Activated T-helper 2 cell treated with anti-CD3 and anti-CD28 coated beads, Interferon-gamma antibody, Interleukin-2, Interleukin-4, amounts not matched to agents 10 μg/mL and 5 μg/mL and 100 μg/mL, durations not matched to agents 14 hours and 24 hours and 36 hours (primary cell): ENCODE measurements at regions of chrX and their contacts with region 1.

Region 1: GRCh38 chrX:41720125-41720779 is 3.7 kb upstream of the GPR82 start:
- DNase-seq: peak; percentile 23
- H3K4me3 Mint-ChIP-seq: no peak overlapping the region
- H3K27ac Mint-ChIP-seq: no peak overlapping the region
- H3K4me1 Mint-ChIP-seq: peaks cover 37% of the 10 kb centered on the region
- H3K27me3 Mint-ChIP-seq: no peaks in the 10 kb centered on the region

Region 2: GRCh38 chrX:40945361-40945713 is 774.9 kb before region 1 on chrX:
- intact Hi-C with region 1: no loop called
- DNase-seq: no peak
- H3K4me3 Mint-ChIP-seq: no peak overlapping the region
- H3K27ac Mint-ChIP-seq: no peak overlapping the region
- H3K4me1 Mint-ChIP-seq: peaks cover 3% of the 10 kb centered on the region
- H3K27me3 Mint-ChIP-seq: no peaks in the 10 kb centered on the region

Region 3: DNA sequence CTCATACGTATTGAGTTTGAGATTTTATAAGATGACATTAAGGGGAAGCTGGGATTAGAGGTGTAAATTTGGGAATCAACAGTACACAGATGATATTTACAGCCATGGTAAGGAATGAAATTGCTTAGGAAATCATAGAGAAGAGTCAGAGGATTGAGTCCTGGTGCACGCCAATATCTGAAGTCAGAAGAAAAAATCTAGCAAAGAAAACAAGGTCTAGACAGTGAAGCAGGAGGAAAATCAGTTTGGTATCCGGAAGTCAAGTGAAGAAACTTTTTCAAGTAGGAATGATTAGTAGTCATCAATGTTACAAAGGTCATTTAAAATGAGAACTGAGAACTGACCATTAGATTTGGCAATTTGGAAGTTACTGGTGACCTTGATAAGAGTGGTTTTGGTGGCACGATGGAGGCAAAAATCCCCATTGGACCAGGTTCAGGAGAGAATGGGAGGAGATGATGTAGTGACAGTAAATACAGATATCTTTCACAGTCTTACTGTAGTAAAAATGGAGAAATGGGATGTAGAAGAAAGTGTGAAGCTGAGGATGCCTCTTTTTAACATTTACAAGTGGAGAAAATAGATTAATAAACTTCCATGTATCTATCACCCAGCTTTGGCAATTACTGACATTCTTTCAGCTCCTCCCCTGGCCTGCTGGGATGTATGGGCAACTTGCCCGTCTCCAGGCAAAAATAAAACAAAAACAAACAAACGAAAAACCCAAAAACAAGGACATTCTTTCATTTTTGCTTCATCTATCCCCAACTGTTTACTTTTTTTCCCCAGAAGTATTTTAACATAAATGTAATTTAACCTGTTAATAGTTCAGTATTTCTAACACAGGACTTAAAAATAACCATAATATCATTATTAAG is 42.8 kb before region 1 on chrX:
- intact Hi-C with region 1: no loop called
- DNase-seq: no peak
- H3K4me3 Mint-ChIP-seq: no peak overlapping the region
- H3K27ac Mint-ChIP-seq: no peak overlapping the region
- H3K4me1 Mint-ChIP-seq: peaks cover 17% of the 10 kb centered on the region
- H3K27me3 Mint-ChIP-seq: no peaks in the 10 kb centered on the region

Region 4: GRCh38 chrX:41703574-41704029 is 16.6 kb before region 1 on chrX:
- intact Hi-C with region 1: loop called (anchors 2 kb)
- DNase-seq: no peak
- H3K4me3 Mint-ChIP-seq: no peak overlapping the region
- H3K27ac Mint-ChIP-seq: no peak overlapping the region
- H3K4me1 Mint-ChIP-seq: peaks cover 25% of the 10 kb centered on the region
- H3K27me3 Mint-ChIP-seq: no peaks in the 10 kb centered on the region

Region 5: GRCh38 chrX:41734530-41734929 is 14.3 kb after region 1 on chrX:
- intact Hi-C with region 1: loop called (anchors 1 kb)
- DNase-seq: no peak
- H3K4me3 Mint-ChIP-seq: peak overlapping the region; percentile 26
- H3K27ac Mint-ChIP-seq: peak overlapping the region; percentile 89
- H3K4me1 Mint-ChIP-seq: peaks cover 28% of the 10 kb centered on the region
- H3K27me3 Mint-ChIP-seq: no peaks in the 10 kb centered on the region

Region 6: GRCh38 chrX:41781502-41781901 is 61.2 kb after region 1 on chrX:
- intact Hi-C with region 1: no loop called
- DNase-seq: no peak
- H3K4me3 Mint-ChIP-seq: no peak overlapping the region
- H3K27ac Mint-ChIP-seq: no peak overlapping the region
- H3K4me1 Mint-ChIP-seq: no peaks in the 10 kb centered on the region
- H3K27me3 Mint-ChIP-seq: no peaks in the 10 kb centered on the region